T-cell (primary cell): ENCODE measurements at regions of chr5 and their contacts with region 1.

Region 1: GRCh38 chr5:119315516-119315949 is 40.3 kb upstream of the TNFAIP8 start:
- DNase-seq: peak in 32 of 35 experiments; percentile 34 to 79 (median 58)
- ATAC-seq: peak; percentile 77 to 88 (median 84)
- H3K4me3 ChIP-seq: no peak overlapping the region
- H3K4me3 Mint-ChIP-seq: peak overlapping the region in 2 of 3 donors; percentile 3 to 52
- H3K27ac ChIP-seq: peak overlapping the region; percentile 60
- H3K27ac Mint-ChIP-seq: peak overlapping the region; percentile 82 to 85
- H3K4me1 ChIP-seq: peaks cover 80 to 87% of the 10 kb centered on the region in 2 experiments
- H3K4me1 Mint-ChIP-seq: peaks cover 93 to 94% (median 94%) of the 10 kb centered on the region in 3 donors
- H3K27me3 ChIP-seq: no peaks in the 10 kb centered on the region
- H3K27me3 Mint-ChIP-seq: no peaks in the 10 kb centered on the region

Region 2: GRCh38 chr5:118956727-118957126 is 358.8 kb before region 1 on chr5:
- CTCF ChIA-PET with region 1: no interaction called
- POLR2A ChIA-PET with region 1: no interaction called
- DNase-seq: no peak
- ATAC-seq: no peak
- H3K4me3 ChIP-seq: no peak overlapping the region
- H3K4me3 Mint-ChIP-seq: no peak overlapping the region
- H3K27ac ChIP-seq: no peak overlapping the region
- H3K27ac Mint-ChIP-seq: no peak overlapping the region
- H3K4me1 ChIP-seq: no peaks in the 10 kb centered on the region
- H3K4me1 Mint-ChIP-seq: no peaks in the 10 kb centered on the region
- H3K27me3 ChIP-seq: no peaks in the 10 kb centered on the region
- H3K27me3 Mint-ChIP-seq: no peaks in the 10 kb centered on the region

Region 3: DNA sequence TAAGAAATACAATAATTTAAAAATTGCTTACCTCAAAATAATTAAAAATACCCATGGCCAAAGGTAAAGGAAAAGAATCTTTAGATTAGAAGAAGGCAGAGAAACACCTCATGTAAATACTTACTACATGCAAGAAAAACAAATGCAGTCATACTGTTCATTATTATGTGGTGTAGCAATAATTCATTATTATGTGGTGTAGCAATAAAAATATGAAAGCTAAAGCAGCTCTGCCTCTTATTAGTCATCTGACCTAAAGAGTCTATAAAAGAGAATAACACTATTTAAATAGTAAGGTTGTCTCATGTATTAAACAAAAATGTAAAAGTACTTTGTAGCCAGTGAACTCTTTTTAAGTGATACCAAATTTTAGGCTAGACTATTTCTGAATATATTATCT is 333.8 kb before region 1 on chr5:
- CTCF ChIA-PET with region 1: no interaction called
- POLR2A ChIA-PET with region 1: no interaction called
- DNase-seq: no peak
- ATAC-seq: no peak
- H3K4me3 ChIP-seq: no peak overlapping the region
- H3K4me3 Mint-ChIP-seq: no peak overlapping the region
- H3K27ac ChIP-seq: no peak overlapping the region
- H3K27ac Mint-ChIP-seq: no peak overlapping the region
- H3K4me1 ChIP-seq: no peaks in the 10 kb centered on the region
- H3K4me1 Mint-ChIP-seq: peaks cover 7 to 22% (median 10%) of the 10 kb centered on the region in 3 donors
- H3K27me3 ChIP-seq: no peaks in the 10 kb centered on the region
- H3K27me3 Mint-ChIP-seq: no peaks in the 10 kb centered on the region

Region 4: GRCh38 chr5:119255571-119256356 is 59.8 kb before region 1 on chr5:
- CTCF ChIA-PET with region 1: interaction called, 3 to 14 read pairs
- POLR2A ChIA-PET with region 1: no interaction called
- DNase-seq: peak in 1 of 35 experiments; percentile 28
- ATAC-seq: no peak
- H3K4me3 ChIP-seq: no peak overlapping the region
- H3K4me3 Mint-ChIP-seq: no peak overlapping the region
- H3K27ac ChIP-seq: no peak overlapping the region
- H3K27ac Mint-ChIP-seq: no peak overlapping the region
- H3K4me1 ChIP-seq: no peaks in the 10 kb centered on the region
- H3K4me1 Mint-ChIP-seq: no peaks in the 10 kb centered on the region
- H3K27me3 ChIP-seq: no peaks in the 10 kb centered on the region
- H3K27me3 Mint-ChIP-seq: no peaks in the 10 kb centered on the region

Region 5: DNA sequence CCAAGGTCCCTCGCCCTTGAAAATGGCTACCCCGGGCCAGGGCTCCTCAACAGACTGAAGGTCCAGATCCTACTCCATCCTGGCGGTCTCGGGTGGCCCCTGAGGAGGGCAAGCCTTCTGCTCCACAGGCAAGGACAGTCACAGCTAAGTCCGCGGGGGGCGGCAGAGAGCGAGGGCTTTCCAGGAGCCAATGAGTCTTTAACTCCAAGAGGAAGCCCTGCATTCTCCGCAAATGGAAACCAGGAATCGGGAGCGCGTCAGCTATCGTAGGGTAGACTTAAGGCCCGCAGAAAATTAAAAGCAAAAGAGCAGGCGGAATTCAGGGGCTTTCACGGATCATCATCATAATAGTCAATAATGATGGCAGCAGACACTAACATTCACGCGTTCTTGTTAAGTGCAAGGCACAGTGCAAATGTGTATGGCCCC is 47.6 kb before region 1 on chr5:
- CTCF ChIA-PET with region 1: interaction called, 3 to 16 read pairs
- POLR2A ChIA-PET with region 1: interaction called in 1 of 2 experiments, 3 read pairs
- DNase-seq: peak; percentile 55 to 93 (median 81)
- ATAC-seq: peak; percentile 55 to 73 (median 60)
- H3K4me3 ChIP-seq: peak overlapping the region; percentile 87 to 98
- H3K4me3 Mint-ChIP-seq: peak overlapping the region; percentile 98 to 100 (median 100)
- H3K27ac ChIP-seq: peak overlapping the region; percentile 86
- H3K27ac Mint-ChIP-seq: peak overlapping the region; percentile 97 to 99
- H3K4me1 ChIP-seq: peaks cover 28 to 29% of the 10 kb centered on the region in 2 experiments
- H3K4me1 Mint-ChIP-seq: peaks cover 55 to 75% (median 61%) of the 10 kb centered on the region in 3 donors
- H3K27me3 ChIP-seq: no peaks in the 10 kb centered on the region
- H3K27me3 Mint-ChIP-seq: no peaks in the 10 kb centered on the region

Region 6: DNA sequence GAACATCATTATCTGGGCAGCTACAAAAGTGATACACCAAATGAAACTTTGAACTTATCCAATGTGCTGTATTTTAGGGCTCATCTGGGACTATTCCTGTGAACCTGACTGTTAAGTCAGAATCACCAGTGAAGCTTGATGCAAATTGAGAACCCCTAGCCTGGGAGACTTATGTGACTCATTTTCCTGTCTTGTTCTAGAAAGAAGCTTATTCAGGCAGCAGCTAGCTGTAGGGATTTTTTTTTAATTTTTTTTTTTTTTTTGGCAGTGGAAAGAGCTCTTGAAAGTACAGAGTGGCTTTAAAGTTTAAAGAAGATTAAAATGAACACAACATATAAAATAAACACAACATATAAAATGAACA is 40.8 kb before region 1 on chr5:
- CTCF ChIA-PET with region 1: interaction called, 3 to 16 read pairs
- POLR2A ChIA-PET with region 1: interaction called, 3 read pairs
- DNase-seq: peak in 1 of 35 experiments; percentile 67
- ATAC-seq: peak; percentile 29 to 56 (median 52)
- H3K4me3 ChIP-seq: no peak overlapping the region
- H3K4me3 Mint-ChIP-seq: peak overlapping the region; percentile 64 to 100 (median 98)
- H3K27ac ChIP-seq: peak overlapping the region; percentile 82
- H3K27ac Mint-ChIP-seq: peak overlapping the region; percentile 97 to 99
- H3K4me1 ChIP-seq: peaks cover 80 to 83% of the 10 kb centered on the region in 2 experiments
- H3K4me1 Mint-ChIP-seq: peaks cover 90 to 98% (median 98%) of the 10 kb centered on the region in 3 donors
- H3K27me3 ChIP-seq: no peaks in the 10 kb centered on the region
- H3K27me3 Mint-ChIP-seq: peaks cover 0 to 2% of the 10 kb centered on the region in 2 donors

Region 7: GRCh38 chr5:119302916-119303897 is 12.3 kb before region 1 on chr5:
- CTCF ChIA-PET with region 1: interaction called, 5 to 10 read pairs
- POLR2A ChIA-PET with region 1: interaction called, 6 to 10 read pairs
- DNase-seq: peak in 1 of 35 experiments; percentile 53
- ATAC-seq: peak; percentile 25 to 78 (median 40)
- H3K4me3 ChIP-seq: peak overlapping the region in 1 of 2 donors; percentile 44
- H3K4me3 Mint-ChIP-seq: peak overlapping the region; percentile 25 to 91 (median 63)
- H3K27ac ChIP-seq: peak overlapping the region; percentile 40
- H3K27ac Mint-ChIP-seq: peak overlapping the region; percentile 95 to 96
- H3K4me1 ChIP-seq: peaks cover 68 to 77% of the 10 kb centered on the region in 2 experiments
- H3K4me1 Mint-ChIP-seq: peaks cover 92 to 96% (median 93%) of the 10 kb centered on the region in 3 donors
- H3K27me3 ChIP-seq: no peaks in the 10 kb centered on the region
- H3K27me3 Mint-ChIP-seq: no peaks in the 10 kb centered on the region

Region 8: DNA sequence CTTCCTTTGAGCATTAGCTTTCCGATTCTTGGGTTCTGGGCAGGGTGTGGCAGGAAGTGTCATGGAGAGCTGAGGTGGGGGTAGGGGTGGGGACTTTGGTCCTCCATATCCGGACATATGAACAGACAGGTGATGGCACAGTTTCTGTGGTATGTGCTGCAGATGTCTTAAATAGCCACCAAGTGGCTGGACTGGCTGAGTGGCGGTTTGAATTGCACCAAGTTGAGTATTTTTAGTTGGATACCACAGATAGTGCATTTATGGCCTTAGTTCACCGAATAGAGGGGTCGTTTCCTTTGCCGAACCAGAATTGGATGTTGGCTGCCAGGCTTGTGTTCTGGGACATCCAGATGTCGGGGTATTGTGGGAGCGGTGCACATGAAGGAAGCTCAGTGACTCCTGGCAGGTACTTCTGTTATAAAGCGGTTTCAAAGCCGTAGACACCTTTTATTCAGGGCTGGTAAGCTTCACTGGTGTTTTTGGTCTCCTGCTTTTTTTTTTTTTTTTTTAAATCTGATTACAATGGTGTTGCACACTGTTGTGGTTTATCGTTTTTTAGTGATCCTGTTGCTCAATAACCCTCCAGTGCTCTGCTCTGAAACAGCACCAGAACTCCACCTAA is 25.2 kb after region 1 on chr5:
- CTCF ChIA-PET with region 1: interaction called, 6 to 36 read pairs
- POLR2A ChIA-PET with region 1: interaction called, 8 to 11 read pairs
- DNase-seq: peak in 32 of 35 experiments; percentile 38 to 75 (median 55)
- ATAC-seq: peak; percentile 61 to 66 (median 64)
- H3K4me3 ChIP-seq: peak overlapping the region; percentile 37 to 53
- H3K4me3 Mint-ChIP-seq: peak overlapping the region; percentile 71 to 89 (median 77)
- H3K27ac ChIP-seq: peak overlapping the region; percentile 91
- H3K27ac Mint-ChIP-seq: peak overlapping the region; percentile 95 to 98
- H3K4me1 ChIP-seq: peaks cover 90 to 97% of the 10 kb centered on the region in 2 experiments
- H3K4me1 Mint-ChIP-seq: peaks cover 94 to 96% (median 96%) of the 10 kb centered on the region in 3 donors
- H3K27me3 ChIP-seq: no peaks in the 10 kb centered on the region
- H3K27me3 Mint-ChIP-seq: no peaks in the 10 kb centered on the region